ENCODE measurements at regions of chr12 and their contacts with region 1.

Region 1: DNA sequence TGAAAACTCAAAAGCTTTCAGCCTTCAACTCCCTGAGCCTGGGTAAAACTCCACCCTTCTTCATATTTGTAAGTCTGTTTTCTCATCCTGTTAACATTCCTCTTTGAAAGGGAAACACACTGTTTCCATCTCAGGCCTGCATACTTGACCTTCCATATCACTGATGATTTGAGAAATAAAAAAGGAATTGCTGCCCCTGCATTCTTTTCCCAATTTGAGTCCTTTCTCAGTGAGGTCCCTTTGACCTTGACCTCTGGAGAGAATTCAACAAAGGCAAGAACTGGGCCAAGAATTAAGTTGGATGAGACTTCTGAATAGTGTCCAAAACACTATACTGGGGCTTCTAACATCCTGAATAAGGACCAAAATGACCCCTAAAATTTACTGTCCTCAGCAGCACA is 108.0 kb downstream of the AEBP2 start:
- DNase-seq: no peak
- H3K4me3 Mint-ChIP-seq: no peak overlapping the region
- H3K27ac Mint-ChIP-seq: no peak overlapping the region
- H3K4me1 Mint-ChIP-seq: peaks cover 5% of the 10 kb centered on the region
- H3K27me3 Mint-ChIP-seq: no peaks in the 10 kb centered on the region

Region 2: DNA sequence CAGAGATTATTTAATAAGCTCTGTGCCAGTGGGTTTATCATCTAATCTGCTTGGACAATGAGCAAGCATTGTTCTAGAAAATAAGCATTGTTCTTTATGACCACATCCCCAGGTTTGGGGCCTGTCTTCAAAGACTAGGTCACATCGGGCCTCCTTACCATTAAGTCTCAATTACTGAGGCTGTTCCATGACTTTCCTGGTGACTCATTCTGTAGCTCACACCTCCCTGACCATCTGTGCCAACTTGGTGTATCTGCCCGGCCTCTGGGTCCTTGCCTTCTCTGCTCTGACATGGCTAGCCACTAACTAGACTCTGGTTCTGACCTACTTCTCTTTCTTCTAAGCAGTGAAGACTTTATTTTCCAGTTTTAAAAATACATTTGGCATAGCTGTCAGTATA is 462.2 kb before region 1 on chr12:
- CTCF ChIA-PET with region 1: no interaction called
- intact Hi-C with region 1: no loop called
- DNase-seq: no peak
- H3K4me3 Mint-ChIP-seq: no peak overlapping the region
- H3K27ac Mint-ChIP-seq: no peak overlapping the region
- H3K4me1 Mint-ChIP-seq: no peaks in the 10 kb centered on the region
- H3K27me3 Mint-ChIP-seq: peaks cover 2% of the 10 kb centered on the region

Region 3: DNA sequence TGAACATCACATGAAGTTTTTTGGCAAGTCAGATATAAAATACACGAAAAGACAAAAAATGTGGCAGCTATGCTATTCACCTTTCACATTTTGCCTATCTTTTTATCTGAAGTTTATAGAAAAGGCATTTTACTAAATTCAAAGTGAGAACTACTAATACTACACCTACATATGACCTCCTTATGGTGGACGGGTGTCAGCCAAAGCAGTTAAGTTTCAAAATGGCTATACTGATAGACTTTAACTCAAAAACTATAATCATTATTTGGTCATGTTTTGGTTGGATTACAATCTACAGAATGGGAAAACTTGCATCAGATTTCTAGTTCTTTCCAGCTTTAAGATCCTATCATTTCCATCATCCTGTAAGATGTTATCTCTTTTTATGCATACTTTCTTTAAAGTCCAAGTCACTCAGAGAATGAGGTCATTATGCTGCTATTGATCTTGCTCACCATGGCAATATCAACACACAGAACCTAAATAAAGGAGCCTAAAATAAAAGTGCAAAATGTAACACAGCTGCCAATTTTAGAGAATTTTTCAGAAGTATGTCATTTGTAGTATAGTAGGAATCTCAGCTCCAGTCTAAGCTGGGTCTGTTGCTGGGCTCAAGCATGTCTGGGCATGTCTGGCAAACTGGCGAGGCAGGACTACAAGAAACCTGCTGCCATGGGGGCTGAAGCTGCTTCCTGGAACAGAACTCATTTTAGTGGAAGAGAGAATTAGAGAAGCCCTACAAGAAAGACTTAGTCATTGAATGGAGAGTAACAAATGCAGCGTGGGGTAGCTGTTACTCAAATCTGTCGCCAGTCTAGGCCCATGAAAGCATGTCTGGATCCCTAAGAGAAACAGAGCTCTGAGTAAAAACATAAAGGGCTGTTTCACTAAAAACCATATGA is 115.6 kb before region 1 on chr12:
- CTCF ChIA-PET with region 1: no interaction called
- intact Hi-C with region 1: loop called (anchors 1 kb)
- DNase-seq: peak; percentile 75
- H3K4me3 Mint-ChIP-seq: no peak overlapping the region
- H3K27ac Mint-ChIP-seq: peak overlapping the region; percentile 95
- H3K4me1 Mint-ChIP-seq: peaks cover 20% of the 10 kb centered on the region
- H3K27me3 Mint-ChIP-seq: no peaks in the 10 kb centered on the region

Measured in activated naive CD4-positive, alpha-beta T cell treated with anti-CD3 and anti-CD28 coated beads for 36 hours (primary cell).